T-cell (primary cell): ENCODE measurements at regions of chr15 and their contacts with region 1.

Region 1: GRCh38 chr15:38699633-38700230 is 135.1 kb upstream of the RASGRP1 start:
- DNase-seq: peak in 34 of 35 experiments; percentile 31 to 88 (median 60)
- ATAC-seq: peak; percentile 48 to 68 (median 52)
- H3K4me3 ChIP-seq: no peak overlapping the region
- H3K4me3 Mint-ChIP-seq: peak overlapping the region in 2 of 3 donors; percentile 6 to 24
- H3K27ac ChIP-seq: no peak overlapping the region
- H3K27ac Mint-ChIP-seq: peak overlapping the region; percentile 75 to 84
- H3K4me1 ChIP-seq: peaks cover 10 to 46% of the 10 kb centered on the region in 2 experiments
- H3K4me1 Mint-ChIP-seq: peaks cover 54 to 61% (median 55%) of the 10 kb centered on the region in 3 donors
- H3K27me3 ChIP-seq: no peaks in the 10 kb centered on the region
- H3K27me3 Mint-ChIP-seq: no peaks in the 10 kb centered on the region

Region 2: GRCh38 chr15:38440353-38441129 is 259.2 kb before region 1 on chr15:
- CTCF ChIA-PET with region 1: interaction called, 4 to 57 read pairs
- POLR2A ChIA-PET with region 1: no interaction called
- DNase-seq: peak in 34 of 35 experiments; percentile 12 to 88 (median 33)
- ATAC-seq: peak; percentile 82 to 91 (median 88)
- H3K4me3 ChIP-seq: no peak overlapping the region
- H3K4me3 Mint-ChIP-seq: no peak overlapping the region
- H3K27ac ChIP-seq: no peak overlapping the region
- H3K27ac Mint-ChIP-seq: no peak overlapping the region
- H3K4me1 ChIP-seq: peaks cover 0 to 5% of the 10 kb centered on the region in 2 experiments
- H3K4me1 Mint-ChIP-seq: peaks cover 5 to 9% (median 8%) of the 10 kb centered on the region in 3 donors
- H3K27me3 ChIP-seq: peaks cover 0 to 2% of the 10 kb centered on the region in 2 experiments
- H3K27me3 Mint-ChIP-seq: peaks cover 21 to 25% of the 10 kb centered on the region in 2 donors

Region 3: GRCh38 chr15:38474155-38474757 is 225.5 kb before region 1 on chr15:
- CTCF ChIA-PET with region 1: interaction called, 23 to 43 read pairs
- POLR2A ChIA-PET with region 1: interaction called in 1 of 2 experiments, 3 read pairs
- DNase-seq: peak in 28 of 35 experiments; percentile 3 to 84 (median 23)
- ATAC-seq: peak; percentile 96 to 99 (median 99)
- H3K4me3 ChIP-seq: no peak overlapping the region
- H3K4me3 Mint-ChIP-seq: no peak overlapping the region
- H3K27ac ChIP-seq: peak overlapping the region; percentile 8
- H3K27ac Mint-ChIP-seq: peak overlapping the region; percentile 79 to 84
- H3K4me1 ChIP-seq: peaks cover 0 to 2% of the 10 kb centered on the region in 2 experiments
- H3K4me1 Mint-ChIP-seq: peaks cover 7 to 19% (median 17%) of the 10 kb centered on the region in 3 donors
- H3K27me3 ChIP-seq: no peaks in the 10 kb centered on the region
- H3K27me3 Mint-ChIP-seq: no peaks in the 10 kb centered on the region

Region 4: GRCh38 chr15:38490242-38490922 is 209.3 kb before region 1 on chr15:
- CTCF ChIA-PET with region 1: interaction called, 3 to 16 read pairs
- POLR2A ChIA-PET with region 1: interaction called, 3 to 4 read pairs
- DNase-seq: no peak
- ATAC-seq: no peak
- H3K4me3 ChIP-seq: no peak overlapping the region
- H3K4me3 Mint-ChIP-seq: no peak overlapping the region
- H3K27ac ChIP-seq: peak overlapping the region; percentile 5
- H3K27ac Mint-ChIP-seq: peak overlapping the region; percentile 48 to 61
- H3K4me1 ChIP-seq: peaks cover 0 to 5% of the 10 kb centered on the region in 2 experiments
- H3K4me1 Mint-ChIP-seq: peaks cover 21 to 53% (median 47%) of the 10 kb centered on the region in 3 donors
- H3K27me3 ChIP-seq: no peaks in the 10 kb centered on the region
- H3K27me3 Mint-ChIP-seq: no peaks in the 10 kb centered on the region

Region 5: DNA sequence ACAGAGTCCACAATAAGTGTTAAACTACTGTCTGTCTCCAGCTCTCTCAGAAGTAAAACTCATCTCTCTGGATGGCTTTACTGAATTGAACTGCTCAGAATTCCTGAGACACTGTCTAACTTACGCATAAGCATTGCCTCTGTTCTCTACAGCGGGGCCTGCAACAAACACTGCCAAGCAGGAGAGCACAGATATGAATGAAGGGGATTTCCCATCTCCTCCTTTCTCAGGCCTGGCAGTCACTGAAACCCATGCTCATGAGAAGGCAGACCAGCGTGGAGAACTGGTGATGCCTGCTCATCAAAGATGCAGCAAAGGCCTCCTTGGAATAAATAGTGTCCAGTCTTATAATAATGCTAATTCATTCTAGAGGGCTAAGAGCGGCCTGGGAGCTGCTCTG is 145.4 kb before region 1 on chr15:
- CTCF ChIA-PET with region 1: interaction called, 6 to 11 read pairs
- POLR2A ChIA-PET with region 1: no interaction called
- DNase-seq: peak in 10 of 35 experiments; percentile 20 to 70 (median 28)
- ATAC-seq: peak; percentile 39 to 86 (median 60)
- H3K4me3 ChIP-seq: no peak overlapping the region
- H3K4me3 Mint-ChIP-seq: peak overlapping the region in 2 of 3 donors; percentile 32 to 87
- H3K27ac ChIP-seq: peak overlapping the region; percentile 31
- H3K27ac Mint-ChIP-seq: peak overlapping the region; percentile 94 to 98
- H3K4me1 ChIP-seq: peaks cover 72 to 75% of the 10 kb centered on the region in 2 experiments
- H3K4me1 Mint-ChIP-seq: peaks cover 90 to 92% (median 91%) of the 10 kb centered on the region in 3 donors
- H3K27me3 ChIP-seq: no peaks in the 10 kb centered on the region
- H3K27me3 Mint-ChIP-seq: no peaks in the 10 kb centered on the region

Region 6: GRCh38 chr15:38652998-38653397 is 46.7 kb before region 1 on chr15:
- CTCF ChIA-PET with region 1: interaction called, 3 to 11 read pairs
- POLR2A ChIA-PET with region 1: interaction called in 1 of 2 experiments, 5 read pairs
- DNase-seq: peak; percentile 54 to 94 (median 80)
- ATAC-seq: peak; percentile 77 to 83 (median 80)
- H3K4me3 ChIP-seq: peak overlapping the region in 1 of 2 donors; percentile 20
- H3K4me3 Mint-ChIP-seq: peak overlapping the region; percentile 69 to 85 (median 78)
- H3K27ac ChIP-seq: peak overlapping the region; percentile 55
- H3K27ac Mint-ChIP-seq: peak overlapping the region; percentile 98
- H3K4me1 ChIP-seq: peaks cover 61 to 63% of the 10 kb centered on the region in 2 experiments
- H3K4me1 Mint-ChIP-seq: peaks cover 75 to 84% (median 81%) of the 10 kb centered on the region in 3 donors
- H3K27me3 ChIP-seq: no peaks in the 10 kb centered on the region
- H3K27me3 Mint-ChIP-seq: no peaks in the 10 kb centered on the region

Region 7: GRCh38 chr15:38683382-38684242 is 16.1 kb before region 1 on chr15:
- CTCF ChIA-PET with region 1: interaction called, 21 to 112 read pairs
- POLR2A ChIA-PET with region 1: interaction called in 1 of 2 experiments, 6 read pairs
- DNase-seq: peak in 34 of 35 experiments; percentile 46 to 88 (median 67)
- ATAC-seq: peak; percentile 47 to 60 (median 50)
- H3K4me3 ChIP-seq: no peak overlapping the region
- H3K4me3 Mint-ChIP-seq: peak overlapping the region in 2 of 3 donors; percentile 57 to 68
- H3K27ac ChIP-seq: peak overlapping the region; percentile 67
- H3K27ac Mint-ChIP-seq: peak overlapping the region; percentile 91 to 98
- H3K4me1 ChIP-seq: peaks cover 59 to 60% of the 10 kb centered on the region in 2 experiments
- H3K4me1 Mint-ChIP-seq: peaks cover 69 to 86% (median 85%) of the 10 kb centered on the region in 3 donors
- H3K27me3 ChIP-seq: no peaks in the 10 kb centered on the region
- H3K27me3 Mint-ChIP-seq: no peaks in the 10 kb centered on the region